PC-9 (cell line): ENCODE measurements at regions of chr6 and their contacts with region 1.

Region 1: GRCh38 chr6:33454009-33454946 is at the start of gene ZBTB9:
- DNase-seq: peak; percentile 91 to 95
- H3K4me3 ChIP-seq: peak within 1 kb of the TSS; percentile 95
- H3K27ac ChIP-seq: no peak within 1 kb of the TSS
- H3K4me1 ChIP-seq: peaks cover 6% of the 10 kb centered on the region
- H3K27me3 ChIP-seq: no peaks in the 10 kb centered on the region
- CTCF ChIP-seq: no peak
- total RNA-seq, gene ZBTB9: 7.9 and 8.4 TPM in 2 replicates

Region 2: GRCh38 chr6:31513456-31514165 is 1940.7 kb before region 1 on chr6:
- CTCF ChIA-PET with region 1: no interaction called
- POLR2A ChIA-PET with region 1: interaction called, 12 read pairs
- intact Hi-C with region 1: no loop called
- DNase-seq: no peak
- H3K4me3 ChIP-seq: no peak overlapping the region
- H3K27ac ChIP-seq: no peak overlapping the region
- H3K4me1 ChIP-seq: peaks cover 16% of the 10 kb centered on the region
- H3K27me3 ChIP-seq: no peaks in the 10 kb centered on the region
- CTCF ChIP-seq: no peak

Region 3: DNA sequence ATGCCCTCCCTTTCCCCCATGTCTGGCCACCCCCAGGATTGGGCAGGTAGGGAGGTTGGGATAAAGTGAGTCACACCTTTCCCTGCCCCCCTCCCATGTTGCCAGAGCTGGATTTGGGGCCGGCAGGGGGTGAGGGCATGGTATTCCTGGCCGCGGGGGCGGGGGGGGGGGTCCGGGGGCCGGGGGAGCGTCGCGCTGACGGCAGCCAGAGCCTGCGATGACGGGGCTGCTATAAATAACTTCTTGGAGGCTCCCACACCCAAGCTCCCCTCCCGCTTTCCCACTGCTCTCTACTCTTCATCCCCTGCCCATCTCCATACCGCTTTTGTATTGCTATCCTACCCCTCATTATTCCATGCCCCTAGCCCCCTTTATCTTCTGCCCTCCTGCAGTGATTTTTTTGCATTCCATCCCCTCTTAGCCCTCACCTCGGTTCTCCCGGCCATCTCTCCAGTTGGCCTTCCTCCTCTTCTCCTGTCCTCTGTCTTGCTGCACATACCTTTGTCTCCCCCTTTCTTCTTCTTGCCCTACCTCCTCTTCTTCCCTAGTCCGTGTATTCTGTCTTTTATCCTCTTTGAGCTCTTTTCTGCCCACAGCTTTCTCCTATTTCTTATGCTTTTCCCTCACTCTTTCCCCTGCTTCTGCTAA is 20.6 kb before region 1 on chr6:
- CTCF ChIA-PET with region 1: no interaction called
- POLR2A ChIA-PET with region 1: no interaction called
- intact Hi-C with region 1: no loop called
- DNase-seq: no peak
- H3K4me3 ChIP-seq: no peak overlapping the region
- H3K27ac ChIP-seq: no peak overlapping the region
- H3K4me1 ChIP-seq: no peaks in the 10 kb centered on the region
- H3K27me3 ChIP-seq: no peaks in the 10 kb centered on the region
- CTCF ChIP-seq: no peak

Region 4: GRCh38 chr6:33570806-33571636 is 116.7 kb after region 1 on chr6:
- CTCF ChIA-PET with region 1: no interaction called
- POLR2A ChIA-PET with region 1: no interaction called
- intact Hi-C with region 1: loop called (anchors 1 kb)
- DNase-seq: peak; percentile 49 to 66
- H3K4me3 ChIP-seq: peak overlapping the region; percentile 71
- H3K27ac ChIP-seq: no peak overlapping the region
- H3K4me1 ChIP-seq: 0 out of 2 replicates have a peak, but pooled peaks cover 5% of the 10 kb centered on the region
- H3K27me3 ChIP-seq: no peaks in the 10 kb centered on the region
- CTCF ChIP-seq: no peak